PC-9 (cell line): ENCODE measurements at regions of chr2 and their contacts with region 1.

Region 1: GRCh38 chr2:69714024-69714423 is 27.9 kb upstream of the ANXA4 start:
- DNase-seq: no peak
- H3K4me3 ChIP-seq: no peak overlapping the region
- H3K27ac ChIP-seq: no peak overlapping the region
- H3K4me1 ChIP-seq: no peaks in the 10 kb centered on the region
- H3K27me3 ChIP-seq: no peaks in the 10 kb centered on the region
- CTCF ChIP-seq: no peak

Region 2: GRCh38 chr2:69386789-69387734 is 327.0 kb before region 1 on chr2 and contains the start of gene GFPT1:
- CTCF ChIA-PET with region 1: no interaction called
- POLR2A ChIA-PET with region 1: no interaction called
- intact Hi-C with region 1: loop called (anchors 5 kb)
- DNase-seq: peak; percentile 83 to 96
- H3K4me3 ChIP-seq: peak within 1 kb of the TSS; percentile 90
- H3K27ac ChIP-seq: peak within 1 kb of the TSS; percentile 76
- H3K4me1 ChIP-seq: peaks cover 42% of the 10 kb centered on the region
- H3K27me3 ChIP-seq: no peaks in the 10 kb centered on the region
- CTCF ChIP-seq: no peak
- total RNA-seq, gene GFPT1: 58.3 and 60.2 TPM in 2 replicates

Region 3: DNA sequence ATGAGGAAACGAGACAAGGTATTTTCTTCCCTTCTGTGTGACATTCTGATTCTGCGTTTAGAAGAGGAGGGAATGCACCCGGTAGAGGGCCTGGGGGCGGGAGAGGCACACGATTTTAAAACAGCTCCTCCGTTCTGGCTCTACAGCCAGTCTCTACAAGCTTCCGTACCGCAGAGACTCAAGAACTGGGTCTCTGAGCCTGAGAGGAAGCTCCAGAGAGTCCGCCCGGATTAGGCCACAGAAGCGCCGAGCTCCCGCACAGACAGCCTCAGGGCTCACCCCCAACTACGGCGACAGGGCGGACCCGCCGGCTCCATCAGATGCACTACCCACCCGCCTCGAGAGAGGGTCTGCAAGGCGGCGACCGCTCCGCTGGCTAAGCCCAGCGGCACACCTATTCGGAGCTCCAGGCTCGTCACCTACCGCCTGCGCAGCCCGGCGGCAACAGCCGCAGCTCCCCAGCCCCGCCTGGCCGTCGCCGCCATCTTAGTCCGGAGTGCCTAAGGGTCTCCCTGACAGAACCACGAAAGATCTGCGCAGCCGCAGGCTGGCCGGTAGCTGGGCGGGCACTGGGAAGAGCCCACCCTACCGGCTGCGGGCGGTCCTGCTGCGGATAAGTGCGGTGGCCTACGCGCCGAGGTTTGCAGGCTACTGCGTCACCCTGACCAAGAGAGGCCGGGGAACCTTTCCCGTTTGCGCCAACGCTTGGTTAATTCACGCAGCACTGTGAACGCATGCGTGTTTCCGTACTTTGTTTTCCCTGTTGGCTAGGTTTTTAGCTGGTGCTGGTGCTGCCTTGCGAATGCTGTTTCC is 276.9 kb before region 1 on chr2 and contains the start of gene NFU1:
- CTCF ChIA-PET with region 1: no interaction called
- POLR2A ChIA-PET with region 1: no interaction called
- intact Hi-C with region 1: loop called (anchors 1 kb)
- DNase-seq: peak; percentile 77 to 88
- H3K4me3 ChIP-seq: peak within 1 kb of the TSS; percentile 80
- H3K27ac ChIP-seq: peak within 1 kb of the TSS; percentile 56
- H3K4me1 ChIP-seq: peaks cover 15% of the 10 kb centered on the region
- H3K27me3 ChIP-seq: no peaks in the 10 kb centered on the region
- CTCF ChIP-seq: peak; percentile 56; the same call in 1 of the 2 replicates
- total RNA-seq, gene NFU1: 29.3 and 35.1 TPM in 2 replicates

Region 4: GRCh38 chr2:69559442-69560146 is 154.4 kb before region 1 on chr2:
- CTCF ChIA-PET with region 1: no interaction called
- POLR2A ChIA-PET with region 1: no interaction called
- intact Hi-C with region 1: loop called (anchors 1 kb)
- DNase-seq: peak; percentile 19 to 76
- H3K4me3 ChIP-seq: no peak overlapping the region
- H3K27ac ChIP-seq: no peak overlapping the region
- H3K4me1 ChIP-seq: peaks cover 25% of the 10 kb centered on the region
- H3K27me3 ChIP-seq: no peaks in the 10 kb centered on the region
- CTCF ChIP-seq: peak; percentile 83

Region 5: GRCh38 chr2:69743847-69744264 is 29.8 kb after region 1 on chr2:
- CTCF ChIA-PET with region 1: no interaction called
- POLR2A ChIA-PET with region 1: no interaction called
- intact Hi-C with region 1: no loop called
- DNase-seq: no peak
- H3K4me3 ChIP-seq: no peak overlapping the region
- H3K27ac ChIP-seq: no peak overlapping the region
- H3K4me1 ChIP-seq: peaks cover 36% of the 10 kb centered on the region
- H3K27me3 ChIP-seq: no peaks in the 10 kb centered on the region
- CTCF ChIP-seq: no peak

Region 6: DNA sequence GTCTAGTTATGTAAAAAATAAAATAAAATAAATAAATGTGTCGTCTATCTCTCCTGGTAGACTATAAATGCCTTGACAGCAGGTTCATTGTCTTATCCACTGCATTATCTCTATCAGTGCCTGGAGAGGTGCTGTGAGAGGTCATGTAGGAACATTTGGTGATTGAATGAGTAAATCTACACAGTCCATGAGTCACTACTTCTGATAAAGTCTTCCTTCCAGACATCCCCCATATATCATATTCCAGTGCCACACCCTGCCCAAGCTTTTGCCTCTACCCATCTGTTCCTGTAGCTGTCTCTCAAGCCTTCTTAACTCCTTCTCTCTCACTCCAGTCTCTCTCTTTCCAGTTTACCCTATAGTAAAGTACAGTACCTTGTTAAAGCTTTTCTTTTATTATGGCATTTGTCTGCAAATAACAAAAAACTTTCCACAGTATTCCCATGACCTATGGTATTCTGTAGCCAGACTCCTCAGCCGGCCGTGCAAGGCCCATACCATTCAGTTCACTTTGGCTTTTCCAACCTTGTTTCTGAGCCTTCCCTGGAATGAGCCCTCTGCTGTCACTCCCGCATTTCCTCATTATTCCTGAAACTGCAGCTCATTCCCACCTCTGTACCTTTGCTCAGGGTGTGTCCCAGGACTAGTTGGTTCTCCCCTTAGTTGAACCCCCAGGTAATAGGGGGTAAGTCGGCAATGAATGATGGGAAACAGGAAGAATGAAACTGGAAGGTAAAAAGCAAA is 65.4 kb after region 1 on chr2:
- CTCF ChIA-PET with region 1: interaction called, 15 read pairs
- POLR2A ChIA-PET with region 1: no interaction called
- intact Hi-C with region 1: no loop called
- DNase-seq: peak; percentile 27 to 77
- H3K4me3 ChIP-seq: no peak overlapping the region
- H3K27ac ChIP-seq: 0 out of 2 replicates have a peak overlapping the region, but pooled peaks have one; percentile 4
- H3K4me1 ChIP-seq: peaks cover 56% of the 10 kb centered on the region
- H3K27me3 ChIP-seq: no peaks in the 10 kb centered on the region
- CTCF ChIP-seq: no peak